ENCODE measurements at regions of chr2 and their contacts with region 1.

Region 1: DNA sequence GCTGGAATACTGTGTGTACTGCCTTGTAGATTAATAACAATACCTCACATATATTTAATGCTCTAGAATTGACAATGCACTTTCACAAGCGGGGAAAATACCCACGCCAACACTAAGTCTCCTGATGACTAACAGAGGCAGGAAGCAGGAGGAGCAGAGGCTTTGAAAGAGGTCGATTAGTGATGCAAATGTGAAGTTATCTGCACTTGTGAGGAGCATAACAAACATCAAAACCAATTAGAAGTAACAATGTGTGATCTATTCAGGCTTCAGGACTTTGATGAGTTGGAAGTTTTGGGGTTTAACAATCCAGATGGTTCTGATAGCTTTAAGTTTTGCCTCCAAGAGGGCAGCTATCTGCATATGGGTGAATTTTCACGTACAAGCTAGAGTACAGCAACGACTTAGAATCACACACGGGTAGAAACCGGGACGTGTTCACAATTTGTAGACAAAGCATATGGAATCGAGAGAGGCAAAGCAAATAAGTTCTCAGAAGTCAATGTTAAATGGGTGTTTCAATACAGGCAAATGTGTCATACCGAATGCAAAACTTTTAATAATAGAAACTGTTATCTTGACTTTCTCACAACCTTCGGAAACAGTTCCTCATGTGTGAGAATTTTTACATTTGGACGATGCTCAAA is 114.5 kb downstream of the METTL8 start:
- DNase-seq: peak; percentile 85
- H3K4me3 Mint-ChIP-seq: peak overlapping the region; percentile 76
- H3K27ac Mint-ChIP-seq: peak overlapping the region; percentile 100
- H3K4me1 Mint-ChIP-seq: peaks cover 50% of the 10 kb centered on the region
- H3K27me3 Mint-ChIP-seq: no peaks in the 10 kb centered on the region

Region 2: DNA sequence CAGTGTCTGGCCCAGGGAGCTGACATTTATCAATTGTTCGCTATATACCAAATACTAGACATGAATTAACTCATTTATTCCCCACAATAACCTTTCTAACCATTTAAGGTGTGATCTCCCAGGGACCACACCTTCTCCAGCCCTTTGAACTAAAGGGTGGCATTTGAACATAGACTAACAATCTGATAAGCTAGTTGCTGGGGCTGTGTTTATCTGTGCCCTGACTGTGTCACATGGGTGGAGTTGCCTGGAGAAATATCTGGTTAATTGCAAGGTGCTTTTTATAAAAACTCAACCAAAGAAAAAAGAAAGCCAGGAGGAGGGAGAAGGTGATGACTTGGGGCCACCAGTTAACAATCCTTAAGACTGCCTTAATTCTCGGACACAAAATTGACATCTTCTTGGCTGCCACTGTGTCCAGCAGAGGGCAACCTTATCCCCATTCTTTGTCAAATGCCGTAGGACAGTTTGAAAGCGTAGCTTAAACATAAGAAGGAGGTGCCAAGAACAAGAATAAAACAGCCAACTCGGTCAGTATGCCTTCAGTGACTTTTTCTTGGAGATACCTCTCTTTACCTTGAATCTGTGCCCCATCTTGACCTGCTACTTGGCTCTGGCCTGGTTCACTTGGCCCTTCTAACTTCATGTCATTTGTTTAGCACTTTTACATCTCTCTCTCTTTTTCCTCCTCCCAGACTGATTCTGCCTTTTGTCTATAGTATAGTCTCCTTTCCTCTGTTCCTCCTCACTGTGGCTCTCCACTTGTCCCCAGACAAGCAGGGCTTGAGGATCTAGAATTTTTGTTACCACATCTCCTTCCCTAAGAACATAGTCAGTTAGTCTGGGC is 958.0 kb before region 1 on chr2:
- intact Hi-C with region 1: loop called (anchors 2 kb)
- DNase-seq: peak; percentile 87
- H3K4me3 Mint-ChIP-seq: peak overlapping the region; percentile 40
- H3K27ac Mint-ChIP-seq: peak overlapping the region; percentile 97
- H3K4me1 Mint-ChIP-seq: peaks cover 38% of the 10 kb centered on the region
- H3K27me3 Mint-ChIP-seq: peaks cover 4% of the 10 kb centered on the region

Region 3: GRCh38 chr2:171086352-171087290 is 232.7 kb before region 1 on chr2:
- intact Hi-C with region 1: loop called (anchors 2 kb)
- DNase-seq: peak; percentile 84
- H3K4me3 Mint-ChIP-seq: peak overlapping the region; percentile 83
- H3K27ac Mint-ChIP-seq: peak overlapping the region; percentile 87
- H3K4me1 Mint-ChIP-seq: peaks cover 53% of the 10 kb centered on the region
- H3K27me3 Mint-ChIP-seq: no peaks in the 10 kb centered on the region

Region 4: DNA sequence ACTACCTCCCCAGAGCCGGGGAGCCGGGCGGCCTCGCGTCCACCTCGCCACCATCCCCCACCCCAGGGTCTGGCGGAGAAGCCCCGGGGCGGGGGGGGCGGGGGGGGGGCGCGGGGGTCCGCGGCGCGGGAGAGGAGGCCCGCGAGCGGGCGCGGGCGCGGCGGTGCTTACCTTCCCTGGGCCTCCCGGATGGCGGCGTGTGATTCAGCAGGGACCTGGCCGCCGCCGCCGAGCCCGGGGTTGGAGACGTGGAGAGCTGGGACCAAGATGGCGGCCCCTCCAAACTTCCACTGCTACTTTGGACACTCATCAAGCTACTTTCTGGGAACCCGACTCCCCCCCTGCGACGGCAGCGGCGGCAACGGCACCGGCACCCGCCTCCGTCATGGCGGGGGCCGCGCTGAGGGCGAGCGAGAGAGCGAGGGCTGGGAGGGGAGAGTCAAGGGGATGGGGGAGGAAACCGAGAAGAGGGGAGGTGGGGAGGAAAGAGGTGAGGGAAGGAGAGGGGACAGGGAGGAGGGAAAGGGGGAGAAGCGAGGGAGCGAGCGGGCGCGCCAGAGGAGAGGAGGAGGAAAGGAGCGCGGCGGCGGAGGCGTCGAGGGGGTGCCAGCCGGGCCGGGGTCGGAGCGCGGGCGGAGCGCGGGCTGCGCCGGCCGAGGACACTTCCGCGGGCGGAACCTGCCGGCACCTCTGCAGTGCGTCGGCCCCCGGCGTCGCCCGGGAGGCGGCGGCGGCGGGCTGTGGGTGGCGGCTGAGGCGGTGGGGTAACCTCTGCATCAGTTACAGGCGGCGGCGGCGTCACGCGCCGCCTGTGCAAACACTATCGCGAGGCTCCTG is 158.9 kb before region 1 on chr2 and contains the start of gene TLK1:
- intact Hi-C with region 1: loop called (anchors 1 kb)
- DNase-seq: peak; percentile 93
- H3K4me3 Mint-ChIP-seq: peak within 1 kb of the TSS; percentile 92
- H3K27ac Mint-ChIP-seq: peak within 1 kb of the TSS; percentile 98
- H3K4me1 Mint-ChIP-seq: peaks cover 49% of the 10 kb centered on the region
- H3K27me3 Mint-ChIP-seq: no peaks in the 10 kb centered on the region
- total RNA-seq, gene TLK1: 91.8 and 94.9 TPM in 2 replicates

Region 5: DNA sequence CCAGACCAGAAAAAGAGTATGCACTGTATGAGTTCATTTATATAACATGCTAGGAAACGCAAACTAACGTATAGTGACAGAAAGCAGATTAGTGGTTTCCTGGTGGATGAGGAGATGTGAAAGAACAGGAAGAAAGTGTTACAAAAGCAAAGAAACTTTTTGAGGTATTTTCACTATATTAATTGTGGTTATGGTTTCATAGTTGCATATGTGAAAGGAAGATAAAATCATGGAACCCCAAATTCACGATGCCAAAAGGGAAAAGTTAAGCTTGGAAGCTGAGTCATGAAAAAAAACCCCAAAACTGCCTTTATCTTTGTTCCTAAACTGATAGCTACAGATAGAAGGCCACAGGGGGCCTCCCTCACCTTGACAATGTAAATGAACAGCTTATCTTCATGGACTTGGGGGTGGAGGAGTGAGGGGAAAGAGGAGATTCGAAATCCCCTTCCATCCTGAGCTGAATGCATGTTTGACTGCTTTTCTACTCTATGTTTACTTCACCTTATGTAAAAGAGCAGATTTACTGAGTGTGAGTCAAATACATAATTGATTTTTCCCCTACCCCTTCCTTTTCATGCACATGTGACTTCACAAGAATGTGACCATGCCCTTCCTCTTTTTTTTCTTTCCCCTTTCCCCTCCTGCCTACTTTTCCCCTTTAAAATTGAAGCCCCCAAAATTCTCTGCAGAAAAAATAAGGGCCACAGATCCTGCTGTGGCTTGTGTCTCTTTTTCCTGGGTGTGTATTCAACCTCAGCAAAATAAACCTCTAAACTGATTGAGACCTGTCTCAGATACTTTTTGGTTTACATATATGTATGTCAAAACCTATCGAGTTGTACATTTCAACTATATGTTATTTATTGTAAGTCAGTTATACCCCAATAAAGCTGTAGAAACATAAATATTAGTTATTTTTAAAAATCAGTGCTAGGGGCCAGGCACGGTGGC is 58.5 kb before region 1 on chr2:
- intact Hi-C with region 1: loop called (anchors 1 kb)
- DNase-seq: peak; percentile 62
- H3K4me3 Mint-ChIP-seq: peak overlapping the region; percentile 10
- H3K27ac Mint-ChIP-seq: peak overlapping the region; percentile 83
- H3K4me1 Mint-ChIP-seq: peaks cover 28% of the 10 kb centered on the region
- H3K27me3 Mint-ChIP-seq: no peaks in the 10 kb centered on the region

Region 6: DNA sequence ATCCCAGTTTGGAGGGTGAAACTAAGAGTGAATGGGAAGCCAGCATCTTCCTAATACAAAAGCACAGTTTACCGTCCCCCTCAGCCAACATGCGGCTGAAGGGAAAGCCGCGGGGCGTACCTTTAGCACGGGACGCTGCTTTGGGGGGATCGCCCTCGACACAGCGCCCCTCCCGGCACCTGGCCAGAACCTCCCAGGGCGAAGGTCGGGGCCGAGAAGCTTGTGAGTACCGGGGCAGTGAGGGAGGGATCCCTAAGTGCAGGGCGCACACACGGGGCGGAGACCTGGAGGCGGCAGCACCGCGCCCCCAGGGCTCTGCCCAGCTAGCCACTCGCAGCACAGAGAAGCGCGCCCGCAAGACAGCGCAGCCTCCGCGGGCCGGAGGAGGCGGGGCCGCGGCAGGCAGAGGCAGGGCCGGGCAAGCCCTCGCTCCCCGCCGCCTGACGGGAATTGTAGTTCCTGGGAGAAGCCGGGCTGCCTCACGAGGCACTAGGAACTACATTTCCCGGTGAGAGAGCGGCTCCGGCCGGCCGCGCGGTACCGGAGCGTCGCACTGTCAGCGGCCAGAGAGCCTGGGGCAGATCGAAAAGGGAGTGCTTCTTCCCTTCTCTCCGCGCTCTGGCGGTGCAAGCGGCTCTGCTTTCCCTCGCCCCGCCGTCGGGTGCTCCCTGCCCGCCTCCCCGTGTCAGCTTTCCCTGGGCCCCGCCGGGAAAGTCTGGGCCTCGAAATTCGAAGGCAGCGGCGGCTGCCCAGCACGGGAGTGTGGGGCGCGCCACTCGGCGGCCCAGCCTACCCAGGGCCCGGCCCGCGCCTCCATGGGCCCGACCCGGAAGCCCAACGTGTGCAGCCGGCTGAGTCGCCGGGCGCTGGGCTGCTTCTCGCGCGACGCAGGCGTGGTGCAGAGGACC is 114.7 kb after region 1 on chr2 and contains the starts of genes DCAF17 and METTL8:
- intact Hi-C with region 1: loop called (anchors 1 kb)
- DNase-seq: peak; percentile 98
- H3K4me3 Mint-ChIP-seq: peak within 1 kb of the TSS; percentile 82
- H3K27ac Mint-ChIP-seq: peak within 1 kb of the TSS; percentile 88
- H3K4me1 Mint-ChIP-seq: peaks cover 23% of the 10 kb centered on the region
- H3K27me3 Mint-ChIP-seq: no peaks in the 10 kb centered on the region
- total RNA-seq, gene DCAF17: 27.3 and 27.4 TPM in 2 replicates
- total RNA-seq, gene METTL8: 33.1 and 42.9 TPM in 2 replicates